Sigmoid colon (tissue), 7 donors: ENCODE measurements at regions of chr10 and their contacts with region 1.

Region 1: DNA sequence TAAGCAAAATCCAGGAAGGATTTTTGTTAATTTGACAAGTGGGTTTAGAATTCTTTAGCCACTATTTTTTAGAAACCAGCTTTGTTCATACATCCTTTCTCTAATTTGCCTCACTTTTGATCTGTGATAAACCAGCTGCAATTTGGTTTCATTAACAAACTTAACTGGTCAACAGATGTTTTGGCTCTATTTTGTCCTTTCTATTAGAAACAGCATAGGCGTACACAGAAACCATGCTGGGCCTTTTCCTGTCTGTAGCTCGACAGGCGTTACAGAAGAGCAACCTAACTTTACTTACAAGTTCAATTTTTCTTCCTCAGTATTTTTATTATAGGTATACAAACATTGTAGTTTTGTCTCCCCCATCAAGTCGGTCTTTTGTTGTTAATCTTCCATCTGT is 28.2 kb downstream of the KAT6B start:
- DNase-seq: no peak
- H3K4me3 ChIP-seq: no peak overlapping the region
- H3K27ac ChIP-seq: peak overlapping the region in 3 of 4 donors; percentile 14 to 38 (median 30)
- H3K4me1 ChIP-seq: peaks cover 0 to 68% (median 29%) of the 10 kb centered on the region in 4 donors
- H3K27me3 ChIP-seq: no peaks in the 10 kb centered on the region
- CTCF ChIP-seq: no peak
- EP300 ChIP-seq: no peak
- POLR2A ChIP-seq: no peak

Region 2: DNA sequence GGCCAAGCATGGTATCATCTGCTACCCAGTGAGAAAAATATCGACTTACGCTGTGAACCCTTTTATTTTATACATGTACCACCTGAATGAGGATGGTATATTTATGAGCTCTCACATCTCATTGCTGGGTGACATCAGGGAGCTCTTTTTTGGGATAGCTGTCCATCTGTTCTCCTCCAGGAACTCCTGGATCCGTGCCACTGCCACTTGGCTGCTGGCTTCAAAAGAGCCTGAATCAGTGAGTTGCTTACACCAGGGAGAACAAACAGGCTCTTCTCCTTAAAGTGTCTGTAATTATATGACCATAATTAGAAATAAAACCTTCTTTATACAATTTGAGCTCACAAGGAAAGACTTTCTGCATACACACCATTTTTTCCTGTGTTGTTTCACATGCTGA is 78.0 kb after region 1 on chr10:
- intact Hi-C with region 1: loop called (anchors 5 kb)
- DNase-seq: peak; percentile 80
- H3K4me3 ChIP-seq: no peak overlapping the region
- H3K27ac ChIP-seq: peak overlapping the region; percentile 70 to 89 (median 82)
- H3K4me1 ChIP-seq: peaks cover 0 to 95% (median 63%) of the 10 kb centered on the region in 4 donors
- H3K27me3 ChIP-seq: no peaks in the 10 kb centered on the region
- CTCF ChIP-seq: no peak
- EP300 ChIP-seq: no peak
- POLR2A ChIP-seq: no peak